ENCODE measurements at regions of chrX and their contacts with region 1.

Region 1: GRCh38 chrX:112043997-112044396 is 38.6 kb downstream of the TRPC5 start:
- DNase-seq: no peak
- ATAC-seq: 0 out of 3 replicates have a peak, but pooled peaks have one; percentile 33
- H3K4me3 ChIP-seq: no peak overlapping the region
- H3K27ac ChIP-seq: no peak overlapping the region
- H3K4me1 ChIP-seq: no peaks in the 10 kb centered on the region
- H3K27me3 ChIP-seq: no peaks in the 10 kb centered on the region; a peak in 1 of 4 replicates
- CTCF ChIP-seq: peak; percentile 16 to 37 (median 21); a peak in 2 of 6 replicates
- EP300 ChIP-seq: no peak
- POLR2A ChIP-seq: no peak
- RAD21 ChIP-seq: peak; percentile 56

Region 2: GRCh38 chrX:111719426-111720210 is 324.4 kb before region 1 on chrX:
- CTCF ChIA-PET with region 1: interaction called, 6 read pairs
- POLR2A ChIA-PET with region 1: no interaction called
- RAD21 ChIA-PET with region 1: no interaction called
- SMC1A ChIA-PET with region 1: no interaction called
- in situ Hi-C with region 1: no loop called
- intact Hi-C with region 1: loop called (anchors 10 kb)
- DNase-seq: no peak
- ATAC-seq: no peak
- H3K4me3 ChIP-seq: no peak overlapping the region
- H3K27ac ChIP-seq: no peak overlapping the region
- H3K4me1 ChIP-seq: no peaks in the 10 kb centered on the region
- H3K27me3 ChIP-seq: no peaks in the 10 kb centered on the region
- CTCF ChIP-seq: peak; percentile 20 to 43 (median 25); a peak in 2 of 6 replicates
- EP300 ChIP-seq: no peak
- POLR2A ChIP-seq: no peak
- RAD21 ChIP-seq: peak; percentile 38

Region 3: GRCh38 chrX:111823128-111823527 is 220.9 kb before region 1 on chrX:
- CTCF ChIA-PET with region 1: no interaction called
- POLR2A ChIA-PET with region 1: no interaction called
- RAD21 ChIA-PET with region 1: no interaction called
- SMC1A ChIA-PET with region 1: interaction called, 3 read pairs
- in situ Hi-C with region 1: no loop called
- intact Hi-C with region 1: loop called (anchors 2 kb)
- DNase-seq: no peak
- ATAC-seq: peak; percentile 74
- H3K4me3 ChIP-seq: no peak overlapping the region
- H3K27ac ChIP-seq: no peak overlapping the region
- H3K4me1 ChIP-seq: no peaks in the 10 kb centered on the region
- H3K27me3 ChIP-seq: no peaks in the 10 kb centered on the region; a peak in 1 of 4 replicates
- CTCF ChIP-seq: peak; percentile 47 to 54 (median 51); a peak in 4 of 6 replicates
- EP300 ChIP-seq: no peak
- POLR2A ChIP-seq: no peak
- RAD21 ChIP-seq: peak; percentile 67

Region 4: DNA sequence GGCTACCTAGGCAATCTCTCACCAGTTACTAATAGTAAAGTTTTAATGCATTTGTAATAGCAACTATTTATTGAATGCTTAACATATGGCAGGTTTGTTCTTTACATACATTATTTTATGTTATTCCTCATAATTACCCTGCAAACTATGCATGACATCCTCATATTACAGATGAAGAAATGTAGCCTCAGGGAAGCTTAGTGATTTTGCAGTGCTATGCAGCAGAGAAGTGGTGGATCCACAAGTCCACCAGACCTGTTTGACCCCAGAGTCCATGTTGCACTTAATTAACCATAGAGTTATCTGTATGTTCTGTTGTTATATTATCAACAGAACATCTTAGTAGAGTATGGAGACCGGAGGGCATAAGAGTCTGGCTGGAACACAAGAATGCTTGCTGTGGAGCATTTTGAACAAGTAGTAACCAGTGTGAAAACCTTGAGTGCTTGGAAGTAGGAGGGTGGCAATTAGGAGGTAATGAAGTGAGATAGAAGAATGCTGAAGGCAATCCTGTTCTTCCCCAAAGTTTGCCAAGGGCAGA is 40.0 kb before region 1 on chrX:
- CTCF ChIA-PET with region 1: no interaction called
- POLR2A ChIA-PET with region 1: no interaction called
- RAD21 ChIA-PET with region 1: no interaction called
- SMC1A ChIA-PET with region 1: no interaction called
- in situ Hi-C with region 1: no loop called
- intact Hi-C with region 1: no loop called
- DNase-seq: no peak
- ATAC-seq: no peak
- H3K4me3 ChIP-seq: no peak overlapping the region
- H3K27ac ChIP-seq: no peak overlapping the region
- H3K4me1 ChIP-seq: no peaks in the 10 kb centered on the region
- H3K27me3 ChIP-seq: no peaks in the 10 kb centered on the region
- CTCF ChIP-seq: no peak
- EP300 ChIP-seq: no peak
- POLR2A ChIP-seq: no peak
- RAD21 ChIP-seq: no peak

Region 5: GRCh38 chrX:112113460-112113859 is 69.5 kb after region 1 on chrX:
- CTCF ChIA-PET with region 1: no interaction called
- POLR2A ChIA-PET with region 1: no interaction called
- RAD21 ChIA-PET with region 1: no interaction called
- SMC1A ChIA-PET with region 1: no interaction called
- in situ Hi-C with region 1: no loop called
- intact Hi-C with region 1: no loop called
- DNase-seq: no peak
- ATAC-seq: no peak
- H3K4me3 ChIP-seq: no peak overlapping the region
- H3K27ac ChIP-seq: no peak overlapping the region
- H3K4me1 ChIP-seq: no peaks in the 10 kb centered on the region
- H3K27me3 ChIP-seq: no peaks in the 10 kb centered on the region; a peak in 1 of 4 replicates
- CTCF ChIP-seq: no peak
- EP300 ChIP-seq: no peak
- POLR2A ChIP-seq: no peak
- RAD21 ChIP-seq: no peak